ENCODE measurements at regions of chr2 and their contacts with region 1.

Region 1: GRCh38 chr2:73085691-73086360 is 14.3 kb upstream of the SFXN5 start:
- DNase-seq: peak; percentile 71 to 80 (median 74)
- H3K4me3 ChIP-seq: no peak overlapping the region
- H3K4me3 Mint-ChIP-seq: no peak overlapping the region
- H3K27ac ChIP-seq: no peak overlapping the region
- H3K27ac Mint-ChIP-seq: peak overlapping the region in 4 of 7 donors; percentile 23 to 53 (median 37)
- H3K4me1 ChIP-seq: no peaks in the 10 kb centered on the region
- H3K4me1 Mint-ChIP-seq: peaks cover 1 to 8% (median 4%) of the 10 kb centered on the region in 4 donors
- H3K27me3 ChIP-seq: no peaks in the 10 kb centered on the region
- H3K27me3 Mint-ChIP-seq: no peaks in the 10 kb centered on the region

Region 2: DNA sequence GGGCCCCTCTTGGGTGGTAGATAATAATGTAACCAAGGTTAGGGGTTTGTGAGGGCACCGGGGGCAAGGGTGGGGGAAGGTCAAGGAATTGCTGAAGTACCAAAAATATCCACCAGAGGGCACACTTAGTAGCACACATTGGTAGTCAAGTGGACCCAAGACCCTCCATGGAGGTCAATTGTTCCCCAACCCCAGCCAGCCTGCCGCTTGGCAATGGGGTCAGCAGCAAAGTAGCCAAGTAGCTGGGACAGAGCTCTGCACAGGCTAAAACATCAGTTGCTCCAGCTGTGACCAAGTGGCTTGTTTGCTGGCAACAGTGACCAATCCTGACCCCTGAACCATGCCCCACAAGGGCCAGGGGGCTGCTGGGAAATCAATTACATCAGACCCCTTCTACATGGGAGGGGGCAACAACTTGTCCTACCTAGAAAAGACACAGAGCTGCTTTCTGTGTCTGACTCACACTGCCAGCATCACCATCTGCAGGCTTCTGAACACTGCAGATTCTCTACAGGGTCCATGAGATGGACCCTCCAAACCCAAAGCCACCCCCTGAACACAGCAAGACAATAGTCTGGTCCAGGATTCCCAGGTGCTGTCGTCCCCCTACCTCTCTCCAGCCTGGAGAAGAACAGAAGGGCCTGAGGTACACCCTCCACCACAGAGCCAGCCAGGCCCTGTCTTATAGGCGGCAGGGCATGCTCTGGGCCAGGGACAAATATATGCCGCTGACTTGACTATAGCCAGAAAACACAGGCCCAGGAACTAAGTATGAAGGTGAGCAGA is 92.5 kb before region 1 on chr2:
- CTCF ChIA-PET with region 1: interaction called, 7 read pairs
- POLR2A ChIA-PET with region 1: no interaction called
- intact Hi-C with region 1: loop called (anchors 5 kb)
- DNase-seq: peak; percentile 43 to 57 (median 49)
- H3K4me3 ChIP-seq: no peak overlapping the region
- H3K4me3 Mint-ChIP-seq: no peak overlapping the region
- H3K27ac ChIP-seq: no peak overlapping the region
- H3K27ac Mint-ChIP-seq: no peak overlapping the region
- H3K4me1 ChIP-seq: no peaks in the 10 kb centered on the region
- H3K4me1 Mint-ChIP-seq: no peaks in the 10 kb centered on the region
- H3K27me3 ChIP-seq: no peaks in the 10 kb centered on the region
- H3K27me3 Mint-ChIP-seq: no peaks in the 10 kb centered on the region

Region 3: DNA sequence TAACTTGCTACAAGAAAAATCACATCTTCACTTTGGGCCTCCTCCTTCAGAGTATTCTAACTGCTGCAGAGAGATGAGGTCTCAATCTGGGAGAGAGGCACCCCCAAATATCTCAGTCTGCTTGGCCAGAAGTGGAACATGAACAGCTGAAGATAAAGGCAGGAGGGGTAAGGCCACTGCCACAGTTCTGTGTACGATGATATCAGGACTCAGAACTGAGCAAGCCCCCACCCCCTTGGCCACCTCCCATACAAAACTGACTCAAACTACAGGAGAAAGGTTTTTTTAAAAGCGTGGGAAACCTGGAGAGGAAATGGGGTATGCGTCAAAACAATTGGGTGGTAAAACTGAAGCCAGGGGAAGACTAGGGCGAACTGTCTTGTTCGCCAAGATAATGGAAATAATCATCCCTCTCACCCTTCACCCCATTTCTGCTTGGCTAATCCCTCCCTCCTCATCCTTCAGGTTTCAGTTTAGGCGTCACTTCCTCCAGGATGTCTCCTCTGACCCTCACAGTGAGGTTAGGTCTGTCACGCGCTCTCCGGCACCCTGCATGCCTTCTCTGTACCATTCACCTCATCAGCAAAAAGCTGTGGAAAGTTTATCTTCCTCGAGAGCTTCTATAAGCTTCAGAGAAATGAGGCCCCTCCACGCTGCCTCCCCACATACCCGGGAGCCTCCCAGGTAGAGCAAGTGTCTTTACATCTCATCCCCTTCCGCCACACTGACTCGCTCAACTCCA is 78.7 kb before region 1 on chr2:
- CTCF ChIA-PET with region 1: no interaction called
- POLR2A ChIA-PET with region 1: no interaction called
- intact Hi-C with region 1: no loop called
- DNase-seq: no peak
- H3K4me3 ChIP-seq: no peak overlapping the region
- H3K4me3 Mint-ChIP-seq: no peak overlapping the region
- H3K27ac ChIP-seq: no peak overlapping the region
- H3K27ac Mint-ChIP-seq: no peak overlapping the region
- H3K4me1 ChIP-seq: no peaks in the 10 kb centered on the region
- H3K4me1 Mint-ChIP-seq: no peaks in the 10 kb centered on the region
- H3K27me3 ChIP-seq: no peaks in the 10 kb centered on the region
- H3K27me3 Mint-ChIP-seq: no peaks in the 10 kb centered on the region

Region 4: DNA sequence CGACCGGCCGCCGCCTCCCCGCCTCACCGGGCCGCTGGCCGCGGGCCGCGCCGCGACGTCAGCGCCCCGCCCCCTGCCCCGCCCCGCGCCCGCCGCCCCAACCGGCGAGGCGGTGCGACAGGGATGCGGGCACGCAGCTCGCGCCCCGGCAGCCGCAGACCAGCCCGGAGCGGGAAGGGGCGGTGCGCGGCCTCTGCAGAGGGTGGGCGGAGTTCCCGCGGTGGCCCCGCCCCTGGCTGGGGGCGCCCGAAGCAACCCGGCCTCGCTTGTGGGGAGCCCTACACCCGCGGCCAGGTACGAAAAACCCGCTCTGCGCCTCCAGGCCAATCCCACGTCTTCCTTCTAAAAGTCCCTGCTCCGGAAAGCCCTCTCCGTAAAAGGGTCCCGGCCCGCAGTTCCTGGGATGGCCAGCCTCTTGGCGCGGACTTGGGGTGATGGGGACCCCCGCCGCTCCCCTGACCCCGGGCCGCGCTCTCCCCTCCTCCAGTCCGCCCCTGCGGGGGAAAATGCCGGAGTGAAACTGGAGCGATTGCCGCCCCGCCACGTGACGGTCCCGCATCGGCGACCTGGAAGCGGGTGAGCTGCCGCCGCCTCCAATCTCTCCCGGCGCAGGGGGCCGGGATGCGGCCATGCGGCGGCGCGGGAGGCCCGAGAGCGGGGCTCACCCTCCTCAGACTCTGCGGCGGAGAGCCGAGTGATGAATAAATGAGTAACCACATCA is 27.2 kb after region 1 on chr2 and contains the start of gene RAB11FIP5:
- CTCF ChIA-PET with region 1: interaction called, 19 read pairs
- POLR2A ChIA-PET with region 1: no interaction called
- intact Hi-C with region 1: no loop called
- DNase-seq: peak; percentile 76 to 83 (median 82)
- H3K4me3 ChIP-seq: peak within 1 kb of the TSS in 1 of 2 donors; percentile 65
- H3K4me3 Mint-ChIP-seq: peak within 1 kb of the TSS; percentile 84 to 91 (median 89)
- H3K27ac ChIP-seq: peak within 1 kb of the TSS; percentile 60
- H3K27ac Mint-ChIP-seq: peak within 1 kb of the TSS; percentile 29 to 90 (median 85)
- H3K4me1 ChIP-seq: peaks cover 31% of the 10 kb centered on the region
- H3K4me1 Mint-ChIP-seq: peaks cover 17 to 40% (median 27%) of the 10 kb centered on the region in 4 donors
- H3K27me3 ChIP-seq: no peaks in the 10 kb centered on the region
- H3K27me3 Mint-ChIP-seq: no peaks in the 10 kb centered on the region
- total RNA-seq, gene RAB11FIP5: 10.9 to 12.8 TPM

Region 5: DNA sequence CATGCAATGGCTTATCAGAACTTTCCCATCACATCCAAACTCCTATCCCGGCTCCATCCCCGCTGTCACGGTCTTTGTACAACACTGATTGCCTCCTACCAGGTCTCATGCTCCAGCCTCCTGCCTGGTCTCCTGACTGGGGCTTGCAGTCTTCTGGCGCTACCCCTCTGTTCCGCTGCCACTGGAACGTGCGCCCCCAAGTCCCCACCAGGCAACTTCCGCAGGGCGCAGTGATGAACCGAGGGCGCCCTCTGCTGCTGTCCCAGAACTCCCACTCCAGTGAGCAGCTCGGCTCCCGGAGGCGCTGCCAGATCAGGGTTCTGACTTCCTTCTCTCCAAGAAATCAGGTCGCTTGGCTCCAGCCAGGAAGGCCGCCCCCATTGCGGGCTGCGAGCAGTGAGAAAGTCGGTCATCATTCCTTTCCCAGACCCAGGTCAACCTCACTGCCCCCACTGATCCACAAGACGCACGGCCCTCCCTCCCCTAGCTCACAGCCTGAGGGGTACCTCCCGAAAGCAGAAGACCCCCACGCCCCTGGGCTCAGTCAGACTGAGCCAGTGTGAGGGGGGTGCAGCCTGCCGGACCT is 70.8 kb after region 1 on chr2:
- CTCF ChIA-PET with region 1: interaction called, 38 read pairs
- POLR2A ChIA-PET with region 1: interaction called, 4 read pairs
- intact Hi-C with region 1: loop called (anchors 1 kb)
- DNase-seq: peak in 3 of 5 donors; percentile 16 to 26 (median 20)
- H3K4me3 ChIP-seq: no peak overlapping the region
- H3K4me3 Mint-ChIP-seq: no peak overlapping the region
- H3K27ac ChIP-seq: no peak overlapping the region
- H3K27ac Mint-ChIP-seq: peak overlapping the region in 2 of 7 donors; percentile 18 to 62
- H3K4me1 ChIP-seq: no peaks in the 10 kb centered on the region
- H3K4me1 Mint-ChIP-seq: peaks cover 0 to 6% (median 0%) of the 10 kb centered on the region in 4 donors
- H3K27me3 ChIP-seq: no peaks in the 10 kb centered on the region
- H3K27me3 Mint-ChIP-seq: peaks cover 27 to 35% of the 10 kb centered on the region in 2 donors

Region 6: GRCh38 chr2:73163483-73164367 is 77.9 kb after region 1 on chr2:
- CTCF ChIA-PET with region 1: interaction called, 48 read pairs
- POLR2A ChIA-PET with region 1: no interaction called
- intact Hi-C with region 1: loop called (anchors 1 kb)
- DNase-seq: peak in 4 of 5 donors; percentile 54 to 59 (median 57)
- H3K4me3 ChIP-seq: no peak overlapping the region
- H3K4me3 Mint-ChIP-seq: no peak overlapping the region
- H3K27ac ChIP-seq: no peak overlapping the region
- H3K27ac Mint-ChIP-seq: no peak overlapping the region
- H3K4me1 ChIP-seq: no peaks in the 10 kb centered on the region
- H3K4me1 Mint-ChIP-seq: no peaks in the 10 kb centered on the region
- H3K27me3 ChIP-seq: no peaks in the 10 kb centered on the region
- H3K27me3 Mint-ChIP-seq: peaks cover 8 to 14% of the 10 kb centered on the region in 2 donors